Activated CD4-positive, alpha-beta T cell treated with anti-CD3 and anti-CD28 coated beads for 36 hours (primary cell): ENCODE measurements at regions of chr16 and their contacts with region 1.

Region 1: GRCh38 chr16:89815639-89816348 is 653 bp downstream of the FANCA start:
- DNase-seq: peak; percentile 43
- ATAC-seq: peak; percentile 21
- H3K4me3 Mint-ChIP-seq: peak overlapping the region; percentile 89
- H3K27ac Mint-ChIP-seq: peak overlapping the region; percentile 67
- H3K4me1 Mint-ChIP-seq: peaks cover 44% of the 10 kb centered on the region
- H3K27me3 Mint-ChIP-seq: no peaks in the 10 kb centered on the region

Region 2: GRCh38 chr16:89093602-89094251 is 722.1 kb before region 1 on chr16 and contains the start of gene ACSF3:
- CTCF ChIA-PET with region 1: no interaction called
- POLR2A ChIA-PET with region 1: no interaction called
- intact Hi-C with region 1: no loop called
- DNase-seq: peak; percentile 78
- ATAC-seq: peak; percentile 35
- H3K4me3 Mint-ChIP-seq: peak within 1 kb of the TSS; percentile 98
- H3K27ac Mint-ChIP-seq: peak within 1 kb of the TSS; percentile 95
- H3K4me1 Mint-ChIP-seq: peaks cover 45% of the 10 kb centered on the region
- H3K27me3 Mint-ChIP-seq: no peaks in the 10 kb centered on the region
- total RNA-seq, gene ACSF3: 39.7 to 41.7 TPM

Region 3: GRCh38 chr16:89507834-89508590 is 307.8 kb before region 1 on chr16 and contains the start of gene SPG7:
- CTCF ChIA-PET with region 1: no interaction called
- POLR2A ChIA-PET with region 1: no interaction called
- intact Hi-C with region 1: loop called in 1 of 2 experiments (anchors 5 kb)
- DNase-seq: peak; percentile 94
- ATAC-seq: peak; percentile 74
- H3K4me3 Mint-ChIP-seq: peak within 1 kb of the TSS; percentile 90
- H3K27ac Mint-ChIP-seq: peak within 1 kb of the TSS; percentile 97
- H3K4me1 Mint-ChIP-seq: peaks cover 31% of the 10 kb centered on the region
- H3K27me3 Mint-ChIP-seq: no peaks in the 10 kb centered on the region
- total RNA-seq, gene SPG7: 68.6 to 76.7 TPM

Region 4: GRCh38 chr16:89602273-89602951 is 213.4 kb before region 1 on chr16:
- CTCF ChIA-PET with region 1: no interaction called
- POLR2A ChIA-PET with region 1: no interaction called
- intact Hi-C with region 1: no loop called
- DNase-seq: peak; percentile 87
- ATAC-seq: peak; percentile 96
- H3K4me3 Mint-ChIP-seq: peak overlapping the region; percentile 24
- H3K27ac Mint-ChIP-seq: no peak overlapping the region
- H3K4me1 Mint-ChIP-seq: peaks cover 16% of the 10 kb centered on the region
- H3K27me3 Mint-ChIP-seq: no peaks in the 10 kb centered on the region

Region 5: GRCh38 chr16:89637379-89637778 is 178.4 kb before region 1 on chr16:
- CTCF ChIA-PET with region 1: no interaction called
- POLR2A ChIA-PET with region 1: no interaction called
- intact Hi-C with region 1: no loop called
- DNase-seq: no peak
- ATAC-seq: no peak
- H3K4me3 Mint-ChIP-seq: no peak overlapping the region
- H3K27ac Mint-ChIP-seq: no peak overlapping the region
- H3K4me1 Mint-ChIP-seq: peaks cover 11% of the 10 kb centered on the region
- H3K27me3 Mint-ChIP-seq: no peaks in the 10 kb centered on the region

Region 6: DNA sequence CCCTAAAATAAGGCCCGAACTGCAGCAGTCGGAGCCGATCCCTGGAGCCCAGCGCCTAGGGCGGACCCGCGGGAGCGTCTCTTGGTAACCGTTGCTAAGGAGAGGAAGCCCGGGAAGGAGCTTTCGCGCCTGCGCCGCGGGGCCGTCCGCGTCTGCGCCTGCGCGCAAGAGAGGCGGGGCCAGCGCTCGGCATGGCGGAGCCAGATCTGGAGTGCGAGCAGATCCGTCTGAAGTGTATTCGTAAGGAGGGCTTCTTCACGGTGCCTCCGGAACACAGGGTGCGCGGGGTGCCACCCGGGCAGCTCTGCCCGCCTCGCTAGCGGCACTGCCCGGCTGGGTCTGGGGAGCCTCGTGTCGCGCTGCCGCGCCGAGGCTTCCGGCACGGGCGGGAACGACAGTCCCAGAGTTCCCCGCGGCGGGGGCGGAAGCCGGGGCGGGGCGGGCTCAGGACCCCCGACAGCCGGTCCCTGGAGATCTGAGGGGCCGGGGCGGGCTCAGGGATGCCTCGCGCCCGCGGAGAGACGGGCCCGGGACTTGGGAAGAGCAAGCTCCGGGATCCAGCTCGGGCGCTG is 129.2 kb before region 1 on chr16 and contains the start of gene CDK10:
- CTCF ChIA-PET with region 1: interaction called, 3 read pairs
- POLR2A ChIA-PET with region 1: no interaction called
- intact Hi-C with region 1: loop called in 1 of 2 experiments (anchors 1 kb)
- DNase-seq: peak; percentile 92
- ATAC-seq: peak; percentile 90
- H3K4me3 Mint-ChIP-seq: peak within 1 kb of the TSS; percentile 86
- H3K27ac Mint-ChIP-seq: peak within 1 kb of the TSS; percentile 88
- H3K4me1 Mint-ChIP-seq: peaks cover 14% of the 10 kb centered on the region
- H3K27me3 Mint-ChIP-seq: no peaks in the 10 kb centered on the region
- total RNA-seq, gene CDK10: 78.1 to 89.8 TPM

Region 7: GRCh38 chr16:89744813-89745212 is 71.0 kb before region 1 on chr16:
- CTCF ChIA-PET with region 1: no interaction called
- POLR2A ChIA-PET with region 1: no interaction called
- intact Hi-C with region 1: no loop called
- DNase-seq: no peak
- ATAC-seq: no peak
- H3K4me3 Mint-ChIP-seq: no peak overlapping the region
- H3K27ac Mint-ChIP-seq: no peak overlapping the region
- H3K4me1 Mint-ChIP-seq: peaks cover 5% of the 10 kb centered on the region
- H3K27me3 Mint-ChIP-seq: no peaks in the 10 kb centered on the region

Region 8: GRCh38 chr16:89828199-89828778 is 12.5 kb after region 1 on chr16 and contains the start of gene SPIRE2:
- CTCF ChIA-PET with region 1: no interaction called
- POLR2A ChIA-PET with region 1: no interaction called
- intact Hi-C with region 1: loop called in 1 of 2 experiments (anchors 1 kb)
- DNase-seq: peak; percentile 85
- ATAC-seq: peak; percentile 89
- H3K4me3 Mint-ChIP-seq: peak within 1 kb of the TSS; percentile 52
- H3K27ac Mint-ChIP-seq: no peak within 1 kb of the TSS
- H3K4me1 Mint-ChIP-seq: no peaks in the 10 kb centered on the region
- H3K27me3 Mint-ChIP-seq: peaks cover 13% of the 10 kb centered on the region
- total RNA-seq, gene SPIRE2: 1.1 to 1.5 TPM

Region 9: GRCh38 chr16:89883703-89884421 is 68.1 kb after region 1 on chr16:
- CTCF ChIA-PET with region 1: interaction called, 3 read pairs
- POLR2A ChIA-PET with region 1: interaction called, 12 read pairs
- intact Hi-C with region 1: no loop called
- DNase-seq: no peak
- ATAC-seq: no peak
- H3K4me3 Mint-ChIP-seq: no peak overlapping the region
- H3K27ac Mint-ChIP-seq: peak overlapping the region; percentile 11
- H3K4me1 Mint-ChIP-seq: no peaks in the 10 kb centered on the region
- H3K27me3 Mint-ChIP-seq: no peaks in the 10 kb centered on the region

Region 10: GRCh38 chr16:90022209-90023064 is 206.6 kb after region 1 on chr16:
- CTCF ChIA-PET with region 1: no interaction called
- POLR2A ChIA-PET with region 1: interaction called, 8 read pairs
- intact Hi-C with region 1: loop called in 1 of 2 experiments (anchors 1 kb)
- DNase-seq: peak; percentile 92
- ATAC-seq: peak; percentile 86
- H3K4me3 Mint-ChIP-seq: peak overlapping the region; percentile 66
- H3K27ac Mint-ChIP-seq: peak overlapping the region; percentile 77
- H3K4me1 Mint-ChIP-seq: peaks cover 21% of the 10 kb centered on the region
- H3K27me3 Mint-ChIP-seq: peaks cover 5% of the 10 kb centered on the region